A549 (cell line): ENCODE measurements at regions of chr1 and their contacts with region 1.

Region 1: DNA sequence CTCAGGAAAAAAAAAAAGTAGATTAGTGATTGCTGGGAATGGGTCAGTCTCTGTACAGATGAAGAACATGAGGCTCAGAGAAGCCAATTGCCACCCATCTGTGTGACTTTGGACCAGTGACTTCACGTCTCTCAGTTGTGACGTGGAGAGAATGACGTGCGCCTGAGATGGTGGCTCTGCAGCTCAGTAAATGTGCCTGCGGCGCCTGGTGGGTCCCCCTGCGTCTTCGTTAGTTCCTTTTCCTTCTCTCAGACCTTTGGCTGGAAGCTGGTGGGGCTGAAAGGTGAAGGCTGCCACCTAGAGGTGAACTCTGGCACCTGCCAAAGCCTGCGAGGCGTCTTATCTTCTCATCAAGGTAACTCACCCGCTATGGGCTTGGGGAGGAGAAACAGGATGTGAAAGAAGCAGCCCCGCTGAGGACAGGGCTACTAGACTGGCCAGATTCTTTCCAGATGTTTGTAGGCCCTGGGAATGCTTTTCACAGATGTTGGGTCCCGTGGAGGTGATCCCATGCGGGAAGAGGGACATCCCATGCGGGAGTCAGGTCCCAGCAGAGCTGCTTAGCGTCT is 8.7 kb upstream of the E2F2 start:
- DNase-seq: peak; percentile 91 to 92
- ATAC-seq: peak; percentile 93 to 98
- H3K4me3 ChIP-seq: no peak overlapping the region
- H3K27ac ChIP-seq: peak overlapping the region; percentile 56 to 77
- H3K4me1 ChIP-seq: peaks cover 15% of the 10 kb centered on the region
- CTCF ChIP-seq: peak; percentile 81
- EP300 ChIP-seq: no peak
- POLR2A ChIP-seq: no peak
- RAD21 ChIP-seq: peak; percentile 92 to 95

Region 2: GRCh38 chr1:22976461-22977243 is 563.1 kb before region 1 on chr1:
- CTCF ChIA-PET with region 1: interaction called, 12 read pairs
- POLR2A ChIA-PET with region 1: interaction called, 3 read pairs
- DNase-seq: peak; percentile 78 to 85
- ATAC-seq: peak; percentile 96 to 97
- H3K4me3 ChIP-seq: no peak overlapping the region
- H3K27ac ChIP-seq: peak overlapping the region; percentile 63 to 85
- H3K4me1 ChIP-seq: peaks cover 34% of the 10 kb centered on the region
- CTCF ChIP-seq: peak; percentile 91
- EP300 ChIP-seq: no peak
- POLR2A ChIP-seq: no peak
- RAD21 ChIP-seq: peak; percentile 87 to 94

Region 3: GRCh38 chr1:23507507-23507906 is 32.3 kb before region 1 on chr1:
- CTCF ChIA-PET with region 1: interaction called, 10 read pairs
- POLR2A ChIA-PET with region 1: no interaction called
- DNase-seq: no peak
- ATAC-seq: peak in 1 of 2 experiments; percentile 36; a peak in 1 of 6 replicates
- H3K4me3 ChIP-seq: no peak overlapping the region
- H3K27ac ChIP-seq: no peak overlapping the region
- H3K4me1 ChIP-seq: no peaks in the 10 kb centered on the region
- CTCF ChIP-seq: no peak
- EP300 ChIP-seq: no peak
- POLR2A ChIP-seq: no peak
- RAD21 ChIP-seq: no peak

Region 4: GRCh38 chr1:23577056-23578004 is 37.5 kb after region 1 on chr1:
- CTCF ChIA-PET with region 1: interaction called, 12 read pairs
- POLR2A ChIA-PET with region 1: no interaction called
- DNase-seq: peak in 1 of 2 experiments; percentile 85
- ATAC-seq: peak; percentile 90 to 93
- H3K4me3 ChIP-seq: peak overlapping the region; percentile 16; the same call in 2 of the 3 replicates
- H3K27ac ChIP-seq: peak overlapping the region; percentile 96 to 100
- H3K4me1 ChIP-seq: peaks cover 67% of the 10 kb centered on the region
- CTCF ChIP-seq: no peak
- EP300 ChIP-seq: peak; percentile 69 to 82; a peak in 4 of 5 replicates
- POLR2A ChIP-seq: no peak
- RAD21 ChIP-seq: peak in 1 of 2 experiments; percentile 1; a peak in 2 of 5 replicates

Region 5: DNA sequence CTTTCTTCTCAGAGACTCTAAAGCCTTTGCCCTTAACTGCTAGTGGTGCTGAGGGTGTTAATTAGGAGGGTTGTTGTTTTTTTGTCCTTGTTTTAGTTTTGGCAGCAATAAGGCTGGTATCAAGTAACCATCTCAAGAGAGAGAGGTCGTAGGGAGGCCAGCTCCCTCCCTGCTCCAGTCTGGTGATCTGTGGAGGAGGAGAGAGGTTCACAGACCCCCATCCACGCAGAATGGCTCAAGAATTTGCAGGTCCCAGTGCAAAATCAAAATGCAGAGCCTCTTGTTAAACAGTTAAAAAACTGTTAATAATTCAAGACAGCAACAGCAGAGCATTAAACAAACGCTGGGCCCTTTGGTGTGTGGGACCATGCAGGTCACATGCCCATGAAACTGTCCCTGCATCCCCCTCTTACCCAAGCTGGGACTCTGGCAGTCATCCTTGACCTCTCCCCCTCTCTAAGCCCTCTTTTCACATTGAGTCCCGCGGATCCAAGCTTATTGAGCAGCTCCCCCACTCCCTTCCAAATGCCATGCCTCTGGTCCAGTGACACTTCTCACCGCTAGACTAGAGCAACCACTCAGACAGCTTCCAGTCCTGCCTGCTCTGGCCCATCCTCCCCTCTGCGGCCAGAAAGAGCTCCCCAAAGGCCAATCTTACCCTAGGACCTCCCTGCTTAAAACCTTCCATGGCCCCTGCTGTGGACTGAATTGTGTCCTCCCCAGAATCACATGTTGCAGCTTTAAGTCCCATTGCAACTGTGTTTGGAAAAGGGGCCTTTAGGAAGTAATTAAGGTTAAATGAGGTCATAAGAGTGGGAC is 104.2 kb after region 1 on chr1:
- CTCF ChIA-PET with region 1: interaction called, 699 read pairs
- POLR2A ChIA-PET with region 1: no interaction called
- DNase-seq: no peak
- ATAC-seq: no peak
- H3K4me3 ChIP-seq: no peak overlapping the region
- H3K27ac ChIP-seq: no peak overlapping the region
- H3K4me1 ChIP-seq: no peaks in the 10 kb centered on the region
- CTCF ChIP-seq: no peak
- EP300 ChIP-seq: no peak
- POLR2A ChIP-seq: no peak
- RAD21 ChIP-seq: no peak

Region 6: GRCh38 chr1:23651069-23651808 is 111.5 kb after region 1 on chr1:
- CTCF ChIA-PET with region 1: interaction called, 11 read pairs
- POLR2A ChIA-PET with region 1: no interaction called
- DNase-seq: peak; percentile 47 to 69
- ATAC-seq: peak; percentile 93 to 95
- H3K4me3 ChIP-seq: no peak overlapping the region
- H3K27ac ChIP-seq: peak overlapping the region; percentile 47 to 54
- H3K4me1 ChIP-seq: peaks cover 13% of the 10 kb centered on the region; the same call in 2 of the 3 replicates
- CTCF ChIP-seq: no peak
- EP300 ChIP-seq: no peak
- POLR2A ChIP-seq: no peak
- RAD21 ChIP-seq: no peak